Naive thymus-derived CD4-positive, alpha-beta T cell (primary cell): ENCODE measurements at regions of chr1 and their contacts with region 1.

Region 1: DNA sequence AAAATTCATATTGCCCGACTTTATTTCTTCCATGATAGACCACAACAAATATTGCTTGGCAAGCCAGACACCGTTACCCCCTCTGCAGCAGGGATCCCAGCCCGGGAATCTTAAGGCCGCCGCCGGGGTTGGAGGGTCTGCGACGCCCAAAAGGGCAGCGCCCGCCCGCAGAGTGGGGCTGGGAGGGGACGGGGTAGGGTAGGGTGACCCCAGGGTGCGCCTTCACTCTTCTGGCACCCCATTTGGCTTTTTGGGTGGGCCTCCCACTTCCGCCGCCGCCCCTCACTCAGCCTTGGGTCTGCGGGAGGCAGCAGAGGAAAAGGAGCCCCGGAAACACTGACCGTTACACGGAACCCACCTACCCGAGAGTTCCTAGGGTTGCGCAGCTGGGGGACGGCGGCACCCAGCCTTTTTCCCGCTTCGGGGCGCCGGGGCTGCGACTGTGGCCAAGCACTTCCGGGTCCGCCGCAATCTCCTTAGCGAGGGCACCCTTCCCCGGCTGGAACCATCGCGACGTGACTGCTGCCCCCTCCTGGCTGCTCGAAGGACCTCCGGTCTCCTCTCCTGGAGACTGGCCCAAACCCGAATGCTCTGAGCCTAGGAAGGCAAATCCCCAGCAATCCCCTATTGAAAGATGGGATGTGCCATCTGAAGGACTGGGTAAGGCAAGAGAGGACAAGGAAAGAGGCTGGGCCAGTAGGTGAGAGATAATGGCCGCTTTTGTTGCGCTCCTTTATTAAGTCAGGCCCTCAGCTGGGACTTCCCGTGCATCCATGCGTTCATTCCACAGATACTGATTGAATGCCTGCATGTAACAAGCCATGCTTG is at the start of gene PIGC:
- DNase-seq: peak; percentile 78 to 89 (median 87)
- ATAC-seq: peak; percentile 100
- H3K4me3 ChIP-seq: peak within 1 kb of the TSS; percentile 72
- H3K4me3 Mint-ChIP-seq: peak within 1 kb of the TSS; percentile 87 to 98 (median 94)
- H3K27ac ChIP-seq: peak within 1 kb of the TSS; percentile 83
- H3K27ac Mint-ChIP-seq: peak within 1 kb of the TSS; percentile 91 to 97 (median 93)
- H3K4me1 ChIP-seq: peaks cover 15 to 25% of the 10 kb centered on the region in 2 donors
- H3K4me1 Mint-ChIP-seq: peaks cover 27 to 53% (median 47%) of the 10 kb centered on the region in 7 donors
- H3K27me3 ChIP-seq: no peaks in the 10 kb centered on the region
- H3K27me3 Mint-ChIP-seq: no peaks in the 10 kb centered on the region
- total RNA-seq, gene PIGC: 21.1 to 57.4 (median 25.1) TPM

Region 2: GRCh38 chr1:172002725-172003345 is 441.0 kb before region 1 on chr1:
- CTCF ChIA-PET with region 1: interaction called, 3 read pairs
- POLR2A ChIA-PET with region 1: interaction called, 3 read pairs
- intact Hi-C with region 1: loop called (anchors 1 kb)
- DNase-seq: peak in 7 of 9 donors; percentile 8 to 53 (median 37)
- ATAC-seq: peak; percentile 55
- H3K4me3 ChIP-seq: no peak overlapping the region
- H3K4me3 Mint-ChIP-seq: no peak overlapping the region
- H3K27ac ChIP-seq: no peak overlapping the region
- H3K27ac Mint-ChIP-seq: no peak overlapping the region
- H3K4me1 ChIP-seq: no peaks in the 10 kb centered on the region
- H3K4me1 Mint-ChIP-seq: peaks cover 0 to 8% (median 3%) of the 10 kb centered on the region in 7 donors
- H3K27me3 ChIP-seq: no peaks in the 10 kb centered on the region
- H3K27me3 Mint-ChIP-seq: no peaks in the 10 kb centered on the region

Region 3: DNA sequence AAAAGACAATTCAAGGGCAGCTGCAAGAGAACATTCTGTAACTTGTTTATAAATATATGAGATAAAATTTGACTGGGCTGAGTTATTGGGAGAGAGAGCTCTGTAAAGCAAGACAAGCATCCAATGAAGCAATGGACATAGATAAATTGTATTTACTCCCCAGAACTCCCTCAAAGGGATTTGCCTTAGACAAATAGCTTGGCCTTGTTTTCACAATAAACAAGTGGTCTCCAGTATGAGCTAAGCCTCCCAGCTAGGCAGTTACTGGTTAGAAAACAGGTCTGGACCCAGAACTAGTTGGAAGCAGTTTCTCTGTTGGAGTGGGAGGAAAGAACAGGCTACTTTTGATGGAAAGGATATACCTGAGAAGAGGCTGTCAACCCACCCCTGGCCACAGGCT is 63.9 kb after region 1 on chr1:
- CTCF ChIA-PET with region 1: no interaction called
- POLR2A ChIA-PET with region 1: no interaction called
- intact Hi-C with region 1: no loop called
- DNase-seq: no peak
- ATAC-seq: no peak
- H3K4me3 ChIP-seq: no peak overlapping the region
- H3K4me3 Mint-ChIP-seq: no peak overlapping the region
- H3K27ac ChIP-seq: no peak overlapping the region
- H3K27ac Mint-ChIP-seq: no peak overlapping the region
- H3K4me1 ChIP-seq: no peaks in the 10 kb centered on the region
- H3K4me1 Mint-ChIP-seq: peaks cover 0 to 4% (median 0%) of the 10 kb centered on the region in 7 donors
- H3K27me3 ChIP-seq: no peaks in the 10 kb centered on the region
- H3K27me3 Mint-ChIP-seq: peaks cover 0 to 27% (median 4%) of the 10 kb centered on the region in 5 donors

Region 4: DNA sequence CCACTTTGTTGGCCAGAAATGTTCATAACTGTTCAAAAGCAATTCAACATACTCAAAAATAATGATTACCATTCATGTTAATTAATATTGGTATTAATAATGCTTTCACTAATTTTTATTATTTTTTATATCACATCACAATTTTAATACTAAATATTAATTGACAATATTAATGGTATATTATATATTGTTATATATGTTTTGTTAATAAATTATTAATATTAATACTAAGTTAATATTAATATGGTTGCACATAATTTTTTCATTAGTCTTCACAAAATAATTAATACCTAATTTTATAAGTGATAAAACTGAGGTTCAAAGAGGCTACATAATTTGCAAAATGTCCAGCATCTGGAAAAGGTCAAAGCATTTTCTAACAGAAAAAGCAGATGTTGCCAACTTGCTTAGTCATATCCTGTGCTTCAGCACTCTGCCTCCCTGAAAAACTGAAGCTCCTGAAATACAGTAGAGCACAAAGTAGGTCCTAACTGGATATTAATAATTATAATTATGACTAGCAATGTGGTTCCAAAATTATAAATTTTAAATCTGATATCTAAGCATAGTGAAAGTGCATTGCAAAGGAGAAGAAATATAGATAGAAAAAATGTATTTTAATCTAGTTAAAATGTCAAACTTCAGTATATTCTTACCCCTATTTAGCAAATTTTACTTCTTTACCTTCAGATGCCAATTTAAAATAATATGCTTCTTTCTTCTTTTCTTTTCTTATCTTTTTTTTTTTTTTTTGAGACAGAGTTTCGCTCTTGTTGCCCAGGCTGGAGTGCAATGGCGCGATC is 886.5 kb after region 1 on chr1:
- CTCF ChIA-PET with region 1: no interaction called
- POLR2A ChIA-PET with region 1: no interaction called
- intact Hi-C with region 1: no loop called
- DNase-seq: no peak
- ATAC-seq: no peak
- H3K4me3 ChIP-seq: no peak overlapping the region
- H3K4me3 Mint-ChIP-seq: peak overlapping the region in 2 of 10 donors; percentile 21 to 63
- H3K27ac ChIP-seq: no peak overlapping the region
- H3K27ac Mint-ChIP-seq: peak overlapping the region in 3 of 9 donors; percentile 84 to 90 (median 85)
- H3K4me1 ChIP-seq: no peaks in the 10 kb centered on the region
- H3K4me1 Mint-ChIP-seq: peaks cover 0 to 19% (median 15%) of the 10 kb centered on the region in 7 donors
- H3K27me3 ChIP-seq: no peaks in the 10 kb centered on the region
- H3K27me3 Mint-ChIP-seq: no peaks in the 10 kb centered on the region